Heart left ventricle (tissue), 16 donors: ENCODE measurements at regions of chr1 and their contacts with region 1.

Region 1: GRCh38 chr1:27473755-27474154 is 16.2 kb downstream of the WASF2 start:
- DNase-seq: no peak
- ATAC-seq: peak in 3 of 4 donors; percentile 24 to 34 (median 31)
- H3K4me3 ChIP-seq: no peak overlapping the region
- H3K27ac ChIP-seq: peak overlapping the region in 1 of 12 donors; percentile 21
- H3K4me1 ChIP-seq: peaks cover 0 to 95% (median 56%) of the 10 kb centered on the region in 12 donors
- H3K27me3 ChIP-seq: no peaks in the 10 kb centered on the region
- CTCF ChIP-seq: no peak
- POLR2A ChIP-seq: no peak

Region 2: GRCh38 chr1:27436204-27437159 is 37.3 kb before region 1 on chr1:
- intact Hi-C with region 1: loop called in 1 of 10 experiments (anchors 5 kb)
- DNase-seq: peak in 1 of 5 donors; percentile 30
- ATAC-seq: peak; percentile 74 to 88 (median 85)
- H3K4me3 ChIP-seq: peak overlapping the region in 5 of 12 donors; percentile 1 to 43 (median 8)
- H3K27ac ChIP-seq: peak overlapping the region; percentile 49 to 94 (median 74)
- H3K4me1 ChIP-seq: peaks cover 20 to 90% (median 78%) of the 10 kb centered on the region in 12 donors
- H3K27me3 ChIP-seq: no peaks in the 10 kb centered on the region
- CTCF ChIP-seq: no peak
- POLR2A ChIP-seq: peak in 1 of 2 donors; percentile 67

Region 3: GRCh38 chr1:27884006-27884954 is 410.5 kb after region 1 on chr1:
- intact Hi-C with region 1: no loop called
- DNase-seq: peak in 1 of 5 donors; percentile 28
- ATAC-seq: peak in 3 of 4 donors; percentile 10 to 43 (median 33)
- H3K4me3 ChIP-seq: no peak overlapping the region
- H3K27ac ChIP-seq: peak overlapping the region in 5 of 12 donors; percentile 30 to 97 (median 64)
- H3K4me1 ChIP-seq: peaks cover 0 to 77% (median 0%) of the 10 kb centered on the region in 12 donors
- H3K27me3 ChIP-seq: no peaks in the 10 kb centered on the region
- CTCF ChIP-seq: no peak
- POLR2A ChIP-seq: no peak